Cardiac septum (tissue), 1 donor: ENCODE measurements at regions of chr10 and their contacts with region 1.

Region 1: DNA sequence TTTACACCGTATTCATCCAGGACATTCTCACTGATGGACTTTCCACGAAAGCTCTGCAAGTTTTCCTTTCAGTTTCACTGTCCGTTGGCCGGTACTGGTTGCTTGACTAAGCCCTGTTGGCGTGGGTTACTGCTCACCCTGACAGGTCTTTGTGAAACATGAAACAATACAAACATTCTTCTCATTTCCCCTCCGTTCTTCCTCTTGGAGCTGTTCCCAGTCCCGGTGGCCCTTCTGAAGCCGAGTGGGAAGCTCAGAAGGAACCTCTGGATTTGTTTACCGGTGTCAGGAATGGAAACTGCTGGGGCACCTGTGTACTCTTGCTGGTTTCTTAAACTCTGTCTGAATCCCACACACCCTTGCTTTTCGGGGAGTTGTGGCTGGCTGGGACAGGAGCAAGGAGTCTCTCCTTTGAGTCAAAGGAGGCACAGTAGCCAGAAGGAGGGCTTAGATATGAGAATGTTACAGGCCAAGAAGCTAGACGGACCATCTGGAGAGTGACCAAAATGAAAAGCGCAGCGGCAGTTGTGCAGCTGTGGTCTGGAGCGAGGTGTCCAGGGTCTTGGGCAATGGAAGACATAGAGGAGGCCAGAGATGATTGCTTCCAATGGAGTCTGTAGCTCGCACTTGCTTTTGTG is 45.7 kb downstream of the LYZL2 start:
- DNase-seq: peak; percentile 81

Region 2: GRCh38 chr10:30413996-30414576 is 169.8 kb before region 1 on chr10:
- intact Hi-C with region 1: loop called (anchors 5 kb)
- DNase-seq: no peak

Region 3: DNA sequence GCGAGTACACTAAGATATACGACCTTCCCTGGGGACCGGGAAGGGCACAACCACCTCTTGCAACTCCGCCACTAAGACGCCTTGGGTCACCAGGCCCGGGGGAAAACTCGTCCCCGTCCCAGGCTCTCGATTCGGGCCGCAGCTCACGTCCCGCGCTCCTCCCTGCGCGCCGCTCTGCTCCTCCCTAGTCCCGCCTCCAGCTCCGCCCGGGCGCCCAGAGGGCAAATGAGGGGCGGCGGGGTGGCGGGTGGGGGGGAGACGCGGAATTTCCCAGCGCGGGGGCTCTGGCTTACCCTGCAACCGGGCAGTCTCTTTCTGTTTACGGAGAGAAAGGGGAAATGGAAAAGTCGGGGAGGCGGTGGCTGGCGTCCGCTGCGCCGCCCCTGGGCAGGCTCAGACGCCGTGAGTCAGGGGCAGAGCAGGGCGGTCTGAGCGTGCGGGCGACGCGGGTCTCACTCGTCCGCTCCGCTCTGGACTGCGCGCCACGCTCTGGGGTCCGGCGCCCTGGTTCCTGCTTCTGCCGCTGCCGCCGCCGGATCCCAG is 150.1 kb before region 1 on chr10 and contains the start of gene MAP3K8:
- intact Hi-C with region 1: loop called (anchors 5 kb)
- DNase-seq: peak; percentile 97
- total RNA-seq, gene MAP3K8: 6.1 TPM

Region 4: DNA sequence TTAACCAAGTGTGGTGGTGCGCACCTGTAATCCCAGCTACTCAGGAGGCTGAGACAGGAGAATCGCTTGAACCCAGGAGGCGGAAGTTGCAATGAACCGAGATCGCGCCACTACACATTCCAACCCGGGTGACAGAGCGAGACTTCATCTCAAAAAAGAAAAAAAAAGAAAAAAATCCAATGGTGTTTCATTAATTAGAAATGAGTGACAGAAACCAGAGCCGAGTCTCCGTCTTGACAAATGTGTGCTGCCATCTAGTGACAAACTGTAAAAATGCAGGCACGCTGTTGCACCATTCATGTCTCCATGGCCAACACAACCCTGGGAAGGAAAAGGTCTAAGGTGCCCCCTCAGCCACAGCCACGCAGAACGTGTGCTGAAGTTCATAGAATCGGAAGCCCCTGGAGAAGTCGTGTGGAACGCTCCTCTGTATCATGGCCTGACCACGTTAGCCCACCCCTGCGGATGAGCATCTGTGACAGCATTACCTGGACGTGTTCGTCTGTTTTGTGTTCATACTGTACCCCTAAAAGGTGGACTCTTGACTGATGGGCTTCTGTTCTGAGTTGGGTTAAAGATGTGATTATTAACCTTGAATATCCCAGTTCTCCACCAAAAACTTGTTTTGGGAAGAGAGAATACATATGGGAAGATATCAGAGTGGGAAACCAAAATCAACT is 49.3 kb before region 1 on chr10:
- intact Hi-C with region 1: loop called (anchors 5 kb)
- DNase-seq: no peak